Mammary epithelial cell (primary cell): ENCODE measurements at regions of chr3 and their contacts with region 1.

Region 1: GRCh38 chr3:39180546-39181346 is 11.6 kb downstream of the XIRP1 start:
- DNase-seq: peak; percentile 86
- H3K4me3 ChIP-seq: peak overlapping the region; percentile 6 to 36 (median 22)
- H3K27ac ChIP-seq: peak overlapping the region; percentile 58
- H3K4me1 ChIP-seq: peaks cover 36% of the 10 kb centered on the region
- H3K27me3 ChIP-seq: no peaks in the 10 kb centered on the region
- CTCF ChIP-seq: peak in 1 of 2 donors; percentile 37

Region 2: GRCh38 chr3:39107388-39108199 is 73.2 kb before region 1 on chr3 and contains the starts of genes GORASP1 and TTC21A:
- CTCF ChIA-PET with region 1: no interaction called
- dilution Hi-C with region 1: no loop called
- in situ Hi-C with region 1: no loop called
- intact Hi-C with region 1: loop called (anchors 2 kb)
- DNase-seq: peak; percentile 81
- H3K4me3 ChIP-seq: peak within 1 kb of the TSS; percentile 72 to 95 (median 91)
- H3K27ac ChIP-seq: peak within 1 kb of the TSS; percentile 86
- H3K4me1 ChIP-seq: peaks cover 27% of the 10 kb centered on the region
- H3K27me3 ChIP-seq: no peaks in the 10 kb centered on the region
- CTCF ChIP-seq: no peak
- total RNA-seq, gene GORASP1: 47.0 to 51.3 TPM
- total RNA-seq, gene TTC21A: 5.2 to 5.7 TPM

Region 3: DNA sequence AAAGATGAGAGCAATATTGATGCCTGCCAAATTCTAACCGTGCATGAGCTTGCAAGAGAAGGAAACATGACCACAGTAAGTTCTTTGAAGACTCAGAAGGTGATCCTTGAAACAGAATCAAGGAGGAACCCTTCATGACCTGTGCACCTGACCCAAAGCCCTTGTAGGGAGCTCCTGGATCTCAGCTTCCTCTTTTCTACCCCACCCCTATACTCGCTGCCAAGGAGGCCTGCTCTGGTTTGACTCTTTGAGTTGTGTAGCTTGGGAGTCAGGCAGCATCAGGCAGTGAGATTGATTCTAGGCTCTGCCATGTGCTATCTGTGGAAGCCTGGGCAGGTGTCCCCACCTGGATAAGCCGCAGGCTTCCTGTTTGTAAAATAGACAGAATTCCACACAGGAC is 62.7 kb before region 1 on chr3:
- CTCF ChIA-PET with region 1: interaction called, 12 read pairs
- dilution Hi-C with region 1: no loop called
- in situ Hi-C with region 1: no loop called
- intact Hi-C with region 1: no loop called
- DNase-seq: no peak
- H3K4me3 ChIP-seq: no peak overlapping the region
- H3K27ac ChIP-seq: no peak overlapping the region
- H3K4me1 ChIP-seq: no peaks in the 10 kb centered on the region
- H3K27me3 ChIP-seq: no peaks in the 10 kb centered on the region
- CTCF ChIP-seq: no peak

Region 4: GRCh38 chr3:39166932-39167532 is 13.7 kb before region 1 on chr3:
- CTCF ChIA-PET with region 1: no interaction called
- dilution Hi-C with region 1: no loop called
- in situ Hi-C with region 1: no loop called
- intact Hi-C with region 1: loop called (anchors 1 kb)
- DNase-seq: peak; percentile 83
- H3K4me3 ChIP-seq: no peak overlapping the region
- H3K27ac ChIP-seq: peak overlapping the region; percentile 33
- H3K4me1 ChIP-seq: peaks cover 18% of the 10 kb centered on the region
- H3K27me3 ChIP-seq: no peaks in the 10 kb centered on the region
- CTCF ChIP-seq: no peak